Ascending aorta (tissue), 2 donors: ENCODE measurements at regions of chr6 and their contacts with region 1.

Region 1: GRCh38 chr6:26175428-26176181 is 88.4 kb downstream of the HFE start:
- DNase-seq: no peak
- H3K4me3 ChIP-seq: no peak overlapping the region
- H3K27ac ChIP-seq: no peak overlapping the region
- H3K4me1 ChIP-seq: peaks cover 0 to 2% of the 10 kb centered on the region in 2 donors
- H3K27me3 ChIP-seq: no peaks in the 10 kb centered on the region
- CTCF ChIP-seq: peak; percentile 35 to 78 (median 49)

Region 2: GRCh38 chr6:26156076-26156849 is 19.3 kb before region 1 on chr6:
- intact Hi-C with region 1: loop called (anchors 1 kb)
- DNase-seq: peak; percentile 67 to 95
- H3K4me3 ChIP-seq: peak overlapping the region; percentile 86 to 91
- H3K27ac ChIP-seq: peak overlapping the region; percentile 98 to 99
- H3K4me1 ChIP-seq: peaks cover 0 to 14% of the 10 kb centered on the region in 2 donors
- H3K27me3 ChIP-seq: no peaks in the 10 kb centered on the region
- CTCF ChIP-seq: peak in 1 of 3 experiments; percentile 24

Region 3: DNA sequence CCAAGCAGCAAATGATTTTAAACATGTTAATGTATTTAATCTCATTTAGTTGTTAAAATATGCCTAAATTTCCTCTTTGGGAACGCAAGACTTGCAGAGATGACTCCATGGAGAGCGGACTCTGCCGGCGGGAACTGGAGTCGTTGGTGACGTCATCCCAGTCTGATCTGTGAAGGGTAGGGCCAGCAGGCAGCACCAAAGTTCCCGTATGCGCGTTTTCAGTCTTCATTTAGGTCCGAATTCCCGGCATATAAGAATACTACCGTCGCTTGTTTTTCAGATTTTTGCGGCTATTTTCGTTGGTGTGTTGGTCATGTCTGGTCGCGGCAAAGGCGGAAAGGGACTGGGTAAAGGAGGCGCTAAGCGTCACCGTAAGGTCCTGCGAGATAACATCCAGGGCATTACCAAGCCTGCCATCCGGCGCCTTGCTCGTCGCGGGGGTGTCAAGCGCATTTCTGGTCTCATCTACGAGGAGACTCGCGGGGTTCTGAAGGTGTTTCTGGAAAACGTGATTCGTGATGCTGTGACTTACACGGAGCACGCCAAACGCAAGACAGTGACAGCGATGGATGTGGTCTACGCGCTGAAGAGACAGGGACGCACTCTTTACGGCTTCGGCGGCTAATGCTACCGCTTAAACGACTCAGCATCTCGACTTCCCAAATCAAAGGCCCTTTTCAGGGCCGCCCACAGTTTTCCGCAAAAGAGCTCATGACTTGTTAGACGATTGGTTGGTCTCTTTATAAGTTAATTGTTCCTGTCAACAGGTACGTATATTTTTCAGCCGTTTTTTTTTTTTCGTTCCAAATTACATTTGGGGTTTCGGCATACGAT is 28.9 kb after region 1 on chr6:
- intact Hi-C with region 1: loop called (anchors 2 kb)
- DNase-seq: peak; percentile 88 to 97
- H3K4me3 ChIP-seq: peak overlapping the region; percentile 66 to 73
- H3K27ac ChIP-seq: peak overlapping the region; percentile 91 to 97
- H3K4me1 ChIP-seq: peaks cover 0 to 4% of the 10 kb centered on the region in 2 donors
- H3K27me3 ChIP-seq: no peaks in the 10 kb centered on the region
- CTCF ChIP-seq: peak; percentile 30 to 38 (median 35)

Region 4: DNA sequence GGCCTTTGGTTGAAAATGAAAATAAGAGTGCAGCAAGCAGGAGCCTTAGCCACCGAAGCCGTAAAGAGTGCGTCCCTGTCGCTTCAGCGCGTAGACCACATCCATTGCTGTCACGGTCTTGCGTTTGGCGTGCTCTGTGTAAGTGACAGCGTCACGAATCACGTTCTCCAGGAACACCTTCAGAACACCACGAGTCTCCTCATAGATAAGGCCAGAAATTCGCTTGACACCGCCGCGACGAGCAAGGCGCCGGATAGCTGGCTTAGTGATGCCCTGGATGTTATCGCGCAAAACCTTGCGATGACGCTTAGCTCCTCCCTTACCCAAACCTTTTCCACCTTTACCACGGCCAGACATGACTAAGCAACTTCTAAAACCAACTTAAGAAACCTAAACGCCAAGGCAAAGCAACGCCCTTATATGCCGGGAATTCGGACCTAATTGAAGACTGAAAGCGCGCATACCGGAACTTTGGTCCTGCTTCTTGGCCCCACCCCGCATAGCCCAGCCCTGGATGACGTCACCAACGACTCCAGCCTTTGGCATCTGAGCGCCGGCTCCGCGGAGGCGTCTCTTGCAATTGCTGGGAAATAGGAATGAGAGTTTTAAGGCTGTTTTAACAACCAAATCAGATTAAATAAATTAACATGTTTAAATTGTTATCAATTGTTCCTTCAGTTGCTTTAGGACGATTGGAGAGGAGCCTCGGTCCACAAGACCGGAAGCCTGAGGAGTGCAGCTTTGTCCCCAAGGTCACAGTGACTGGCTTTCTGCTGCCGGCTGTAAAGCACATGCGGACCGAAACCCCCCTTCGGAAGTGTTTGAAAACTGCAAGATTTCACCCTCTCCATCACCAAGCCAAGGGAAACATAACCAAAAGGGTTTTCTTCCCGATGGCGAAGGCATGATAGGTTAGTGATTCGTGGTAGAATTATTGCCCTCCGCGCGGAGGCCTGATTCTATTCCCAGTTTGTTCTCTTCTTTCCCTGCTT is 109.8 kb after region 1 on chr6:
- intact Hi-C with region 1: loop called (anchors 5 kb)
- DNase-seq: peak; percentile 92 to 99
- H3K4me3 ChIP-seq: peak overlapping the region; percentile 71 to 79
- H3K27ac ChIP-seq: peak overlapping the region; percentile 93 to 97
- H3K4me1 ChIP-seq: no peaks in the 10 kb centered on the region
- H3K27me3 ChIP-seq: no peaks in the 10 kb centered on the region
- CTCF ChIP-seq: no peak

Region 5: DNA sequence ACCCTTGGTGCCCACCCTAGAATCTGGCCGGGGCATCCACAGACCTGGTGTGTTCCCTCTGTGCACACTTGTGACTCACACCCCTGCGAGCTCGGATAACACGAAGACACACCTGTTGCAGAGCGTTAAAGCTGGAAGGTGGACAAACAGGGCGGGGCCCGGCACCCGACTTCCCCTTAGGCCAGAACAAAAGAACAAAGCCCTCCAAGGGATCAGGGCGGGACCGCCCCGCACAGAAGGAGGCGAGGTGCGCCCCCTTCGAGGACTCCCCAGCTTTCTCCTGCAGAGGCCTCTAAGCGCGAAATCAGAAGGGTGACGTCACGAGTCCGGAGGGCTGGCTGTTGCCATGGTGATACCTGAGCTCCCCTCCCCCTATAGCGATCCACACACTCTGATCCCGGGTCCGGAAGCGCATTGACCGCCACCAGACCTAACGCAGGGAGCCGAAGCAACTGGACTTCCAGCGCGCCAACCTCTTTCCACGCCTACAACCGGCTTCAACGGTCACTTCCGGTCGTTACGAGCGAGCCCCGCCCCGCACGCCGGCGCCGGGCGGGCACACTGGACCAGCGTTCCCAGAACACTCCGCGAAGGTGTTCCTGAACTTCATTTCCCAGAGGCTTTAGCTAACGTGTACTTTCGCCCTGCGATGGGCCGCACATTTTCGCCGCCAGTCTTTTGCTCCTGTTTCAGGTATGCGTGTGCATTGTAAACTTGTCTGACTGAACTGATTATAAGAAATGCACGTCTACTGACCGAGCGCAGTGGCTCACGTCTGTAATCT is 1297.2 kb after region 1 on chr6 and contains the start of gene ZNF184:
- intact Hi-C with region 1: loop called (anchors 5 kb)
- DNase-seq: peak; percentile 75 to 97
- H3K4me3 ChIP-seq: peak within 1 kb of the TSS; percentile 65 to 89
- H3K27ac ChIP-seq: peak within 1 kb of the TSS; percentile 84 to 86
- H3K4me1 ChIP-seq: peaks cover 0 to 8% of the 10 kb centered on the region in 2 donors
- H3K27me3 ChIP-seq: no peaks in the 10 kb centered on the region
- CTCF ChIP-seq: peak in 2 of 3 experiments; percentile 7 to 12
- total RNA-seq, gene ZNF184: 2.1 TPM